ENCODE measurements at regions of chr3 and their contacts with region 1.

Region 1: DNA sequence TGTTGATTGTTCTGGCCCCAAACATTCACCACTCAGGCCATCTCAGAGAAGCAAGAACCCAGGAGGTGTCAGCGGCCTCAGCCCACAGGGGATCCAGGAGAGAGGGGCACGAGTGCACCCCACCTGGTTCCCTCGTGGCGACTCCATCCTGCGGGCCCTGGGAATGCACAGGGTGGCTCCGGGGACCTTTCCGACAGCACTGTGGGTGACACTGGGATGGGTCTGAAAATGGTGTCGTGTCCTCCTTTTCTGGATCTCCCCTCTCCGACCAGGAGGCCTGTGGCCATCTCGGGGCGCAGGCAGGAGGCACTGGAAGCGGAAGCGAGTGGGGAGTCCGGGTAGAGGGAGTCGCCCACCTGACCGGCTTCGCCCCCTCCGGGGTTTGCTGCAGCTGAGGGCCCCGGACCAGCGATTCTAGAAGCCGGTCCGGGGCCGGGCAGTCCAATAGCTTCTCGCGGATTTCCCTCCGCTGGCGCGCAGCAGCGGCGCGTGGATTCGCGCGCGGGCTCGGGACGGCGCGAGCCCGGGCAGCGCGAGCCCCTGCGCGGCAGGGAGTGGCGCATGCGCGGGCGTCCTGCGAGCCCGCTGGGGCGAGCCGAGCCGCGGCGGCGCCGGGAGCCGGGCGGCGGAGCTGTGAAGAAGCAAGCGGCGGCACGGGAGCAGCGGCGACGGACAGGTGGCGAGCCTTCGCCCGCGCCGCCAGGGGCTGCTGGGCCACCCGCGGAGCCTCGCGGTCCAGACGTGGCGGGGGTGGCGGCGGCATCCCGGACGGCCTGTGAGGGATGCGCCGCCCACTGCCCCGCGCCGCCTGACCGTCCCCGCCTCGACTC is at the start of gene DOCK3:
- DNase-seq: peak; percentile 53

Region 2: GRCh38 chr3:51336261-51336660 is 661.7 kb after region 1 on chr3:
- in situ Hi-C with region 1: no loop called
- DNase-seq: no peak

Region 3: DNA sequence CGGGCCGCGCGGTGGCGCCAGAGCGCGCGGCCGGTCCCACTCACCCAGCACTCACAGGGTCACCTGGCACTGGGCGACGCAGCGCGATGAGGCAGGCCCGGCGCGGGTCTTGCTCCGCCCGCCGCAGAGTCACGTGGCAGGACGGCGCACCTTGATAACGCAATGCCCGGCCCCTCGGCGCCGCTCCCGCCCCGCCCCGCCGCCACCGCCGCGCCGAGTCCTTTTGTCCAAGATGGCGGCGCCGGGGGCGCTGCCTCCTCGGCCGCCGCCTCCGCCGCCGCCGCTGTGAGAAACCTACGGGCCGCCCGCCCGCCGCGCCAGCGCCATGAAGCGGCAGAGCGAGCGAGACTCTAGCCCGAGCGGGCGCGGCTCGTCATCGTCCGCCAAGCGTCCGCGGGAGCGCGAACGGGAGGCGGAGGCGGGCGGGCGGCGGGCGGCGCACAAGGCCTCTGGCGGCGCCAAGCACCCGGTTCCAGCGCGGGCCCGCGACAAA is 716.6 kb after region 1 on chr3 and contains the start of gene RBM15B:
- in situ Hi-C with region 1: loop called (anchors 25 kb)
- DNase-seq: peak; percentile 96

Measured in KBM-7 (cell line).